SK-N-SH (cell line): ENCODE measurements at regions of chr2 and their contacts with region 1.

Region 1: GRCh38 chr2:112726497-112727190 is 5.8 kb downstream of the NT5DC4 start:
- DNase-seq: peak; percentile 92
- H3K4me3 ChIP-seq: no peak overlapping the region; a peak in 1 of 4 replicates
- H3K27ac ChIP-seq: no peak overlapping the region
- H3K4me1 ChIP-seq: peaks cover 0 to 6% of the 10 kb centered on the region in 2 experiments; a peak in 1 of 4 replicates
- H3K27me3 ChIP-seq: no peaks in the 10 kb centered on the region
- CTCF ChIP-seq: peak; percentile 95
- EP300 ChIP-seq: no peak
- RAD21 ChIP-seq: peak; percentile 96

Region 2: DNA sequence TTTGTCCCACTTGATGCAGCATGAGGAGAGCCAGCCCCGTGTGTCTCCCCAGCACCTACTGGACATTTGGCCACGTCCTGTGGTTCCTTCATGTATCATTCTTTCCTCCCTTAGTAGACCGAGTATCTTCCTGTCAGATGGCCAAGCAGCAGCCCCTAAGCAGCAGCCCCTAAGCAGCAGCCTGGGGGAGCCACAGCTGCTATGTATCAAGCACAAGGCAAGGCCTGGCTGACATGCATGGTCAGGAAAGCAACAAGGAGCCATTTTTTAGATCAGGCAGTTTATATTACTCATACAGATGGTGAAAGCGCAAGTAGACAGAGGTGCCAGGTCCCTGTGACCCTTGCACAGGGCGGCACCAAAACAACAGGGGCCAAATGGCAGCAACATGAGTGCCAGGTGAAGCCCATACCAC is 120.1 kb before region 1 on chr2:
- CTCF ChIA-PET with region 1: interaction called, 149 read pairs
- POLR2A ChIA-PET with region 1: no interaction called
- DNase-seq: no peak
- H3K4me3 ChIP-seq: no peak overlapping the region
- H3K27ac ChIP-seq: no peak overlapping the region
- H3K4me1 ChIP-seq: no peaks in the 10 kb centered on the region
- H3K27me3 ChIP-seq: no peaks in the 10 kb centered on the region
- CTCF ChIP-seq: no peak
- EP300 ChIP-seq: no peak
- RAD21 ChIP-seq: no peak

Region 3: DNA sequence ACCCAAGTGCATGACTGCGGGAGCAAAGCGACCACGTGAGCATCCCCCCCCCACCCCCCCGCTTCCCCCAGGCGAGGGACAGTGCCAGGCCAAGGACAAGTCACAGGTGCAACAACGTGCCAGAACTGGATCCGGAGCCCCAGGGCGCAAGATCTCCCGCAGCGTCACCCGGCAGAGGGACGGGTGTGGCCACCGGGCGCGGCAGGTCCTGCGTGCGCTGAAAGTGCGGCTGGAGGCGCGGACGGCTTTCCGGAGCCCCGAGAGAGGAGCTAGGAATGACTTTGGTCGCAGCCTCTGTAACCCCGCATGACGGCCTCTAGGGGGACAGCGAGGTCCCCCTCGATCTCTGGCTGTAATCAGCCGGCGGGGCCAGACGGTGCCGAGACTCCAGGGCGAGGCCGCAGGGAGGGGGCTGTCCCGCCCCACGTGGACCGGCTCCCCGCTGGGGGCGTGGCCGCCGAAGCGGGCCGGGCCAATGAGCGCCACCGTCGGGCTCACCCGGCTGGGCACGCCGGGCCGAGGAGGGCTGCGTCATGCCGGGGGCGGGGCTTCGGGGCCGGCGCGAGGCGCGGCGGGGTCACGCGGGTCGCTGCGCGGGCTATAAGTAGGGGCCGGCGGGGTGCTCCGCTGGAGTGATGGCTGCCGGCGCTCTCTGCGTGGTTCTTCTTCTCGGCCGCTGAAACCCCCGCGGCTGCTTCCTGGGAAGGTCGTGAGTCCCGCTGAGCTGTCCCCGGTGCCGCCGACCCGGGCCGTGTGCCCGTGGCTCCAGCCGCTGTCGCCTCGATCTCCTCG is 81.1 kb before region 1 on chr2 and contains the start of gene SLC20A1:
- CTCF ChIA-PET with region 1: interaction called, 13 read pairs
- POLR2A ChIA-PET with region 1: no interaction called
- DNase-seq: peak; percentile 99
- H3K4me3 ChIP-seq: peak within 1 kb of the TSS; percentile 62 to 76
- H3K27ac ChIP-seq: peak within 1 kb of the TSS; percentile 87 to 93
- H3K4me1 ChIP-seq: peaks cover 22 to 49% of the 10 kb centered on the region in 2 experiments
- H3K27me3 ChIP-seq: no peaks in the 10 kb centered on the region
- CTCF ChIP-seq: peak; percentile 43
- EP300 ChIP-seq: no peak
- RAD21 ChIP-seq: no peak
- polyA plus RNA-seq, gene SLC20A1: 56.3 and 62.0 TPM in 2 replicates

Region 4: DNA sequence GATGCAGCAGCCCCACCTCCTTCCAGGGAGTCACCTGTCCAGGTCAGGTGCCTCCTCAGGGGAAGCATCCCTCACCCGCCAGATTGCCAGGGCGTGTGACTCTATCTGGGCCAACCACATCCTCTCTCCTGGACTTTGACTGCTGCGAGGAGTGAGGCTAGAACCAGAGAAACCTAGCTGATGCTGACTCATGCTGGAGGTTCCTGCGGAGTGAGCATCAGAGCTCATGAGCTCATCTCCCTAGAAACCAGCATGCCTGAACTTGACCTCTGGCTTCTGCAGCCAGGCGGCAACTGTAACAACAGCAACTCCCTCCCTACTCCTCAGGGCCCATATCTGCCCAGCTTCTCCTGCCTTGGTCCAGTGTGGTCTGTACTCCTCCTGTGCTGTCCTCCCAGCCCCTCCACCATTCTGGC is 34.1 kb before region 1 on chr2:
- CTCF ChIA-PET with region 1: interaction called, 13 read pairs
- POLR2A ChIA-PET with region 1: no interaction called
- DNase-seq: no peak
- H3K4me3 ChIP-seq: no peak overlapping the region
- H3K27ac ChIP-seq: peak overlapping the region in 1 of 2 experiments; percentile 73; a peak in 2 of 4 replicates
- H3K4me1 ChIP-seq: peaks cover 5 to 21% of the 10 kb centered on the region in 2 experiments; a peak in 3 of 4 replicates
- H3K27me3 ChIP-seq: no peaks in the 10 kb centered on the region
- CTCF ChIP-seq: no peak
- EP300 ChIP-seq: no peak; a peak in 1 of 4 replicates
- RAD21 ChIP-seq: no peak

Region 5: DNA sequence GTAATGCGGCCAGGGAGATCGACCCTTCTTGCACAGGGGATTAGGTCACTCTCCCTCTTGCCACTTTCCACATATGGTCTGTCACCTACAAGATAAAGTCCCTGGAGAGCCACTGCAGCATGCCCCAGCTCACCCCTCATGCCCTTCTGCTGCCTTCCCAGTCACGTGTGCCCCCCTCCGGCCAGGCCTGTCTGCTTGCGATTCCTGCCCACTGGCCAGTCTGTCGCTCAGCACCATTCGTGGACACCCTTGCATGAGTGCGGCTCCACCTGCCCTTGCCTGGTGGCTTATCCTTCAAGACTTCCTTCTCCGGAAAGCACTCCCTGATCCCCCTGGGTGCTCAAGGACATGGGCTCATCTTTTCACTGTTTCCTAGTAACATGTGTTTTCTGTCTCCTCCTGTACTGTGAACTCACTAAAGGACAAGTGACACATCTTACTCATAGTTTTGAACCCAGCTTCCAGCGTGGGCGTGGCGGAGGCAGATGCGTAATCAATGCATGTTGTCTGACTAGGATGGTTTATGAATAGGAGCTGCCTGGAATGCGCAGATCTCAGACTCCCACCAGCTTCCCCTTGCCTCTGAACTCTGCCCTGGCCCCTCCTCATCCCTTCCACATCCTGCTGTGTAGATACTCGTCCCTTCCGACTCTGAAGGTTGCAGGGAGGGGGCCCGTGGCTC is 13.6 kb before region 1 on chr2:
- CTCF ChIA-PET with region 1: interaction called, 13 read pairs
- POLR2A ChIA-PET with region 1: no interaction called
- DNase-seq: no peak
- H3K4me3 ChIP-seq: no peak overlapping the region
- H3K27ac ChIP-seq: no peak overlapping the region
- H3K4me1 ChIP-seq: no peaks in the 10 kb centered on the region
- H3K27me3 ChIP-seq: no peaks in the 10 kb centered on the region
- CTCF ChIP-seq: no peak
- EP300 ChIP-seq: no peak
- RAD21 ChIP-seq: no peak

Region 6: GRCh38 chr2:112749755-112750559 is 23.3 kb after region 1 on chr2:
- CTCF ChIA-PET with region 1: interaction called, 32 read pairs
- POLR2A ChIA-PET with region 1: no interaction called
- DNase-seq: peak; percentile 72
- H3K4me3 ChIP-seq: no peak overlapping the region; a peak in 1 of 4 replicates
- H3K27ac ChIP-seq: peak overlapping the region; percentile 1 to 57; a peak in 3 of 4 replicates
- H3K4me1 ChIP-seq: peaks cover 0 to 7% of the 10 kb centered on the region in 2 experiments; a peak in 1 of 4 replicates
- H3K27me3 ChIP-seq: no peaks in the 10 kb centered on the region
- CTCF ChIP-seq: peak; percentile 98
- EP300 ChIP-seq: no peak
- RAD21 ChIP-seq: peak; percentile 76